ENCODE measurements at regions of chr16 and their contacts with region 1.

Region 1: DNA sequence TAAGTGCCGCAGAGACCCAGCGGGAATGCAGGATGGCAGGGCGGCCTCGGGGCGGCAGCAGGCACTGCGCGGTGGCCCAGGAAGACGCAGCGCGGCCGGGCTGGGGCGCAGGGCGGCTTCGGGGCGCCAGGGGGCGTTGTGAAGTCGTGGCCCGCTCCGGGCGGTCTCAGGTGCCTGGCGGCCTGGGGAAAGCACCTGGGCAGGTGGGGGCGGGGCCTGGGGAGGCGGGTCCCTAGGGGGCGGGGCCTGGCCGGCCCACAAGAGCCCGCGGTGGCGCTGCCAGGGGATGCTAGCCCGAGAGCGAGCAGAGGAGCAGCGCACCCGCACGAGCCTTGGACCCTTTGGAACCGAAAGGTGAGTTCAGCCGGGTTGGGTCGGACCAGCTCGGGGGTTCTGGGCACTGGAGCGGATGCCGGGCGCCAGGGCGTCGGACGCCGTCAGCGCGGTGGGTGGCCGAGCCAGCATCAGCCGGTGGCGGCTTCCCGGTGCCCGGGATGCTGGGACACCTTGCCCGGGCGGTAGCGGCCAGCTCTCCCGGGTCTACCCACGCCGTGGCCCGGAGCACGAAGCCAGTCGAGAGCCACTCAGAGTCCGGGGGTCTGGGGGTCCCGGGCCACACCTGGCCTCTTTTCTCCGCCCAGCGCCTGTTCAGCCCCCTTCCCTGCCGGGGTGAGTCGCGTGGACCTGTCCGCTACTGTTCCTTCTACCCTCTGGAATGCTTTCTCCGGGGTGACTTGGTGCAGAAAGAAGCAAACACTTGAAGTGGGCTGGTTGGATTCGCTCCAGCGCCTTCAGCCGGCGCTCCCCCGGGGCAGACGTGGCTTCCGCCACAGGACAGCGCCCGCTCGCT is at the start of gene SCNN1G:
- DNase-seq: no peak
- H3K4me3 ChIP-seq: peak within 1 kb of the TSS; percentile 17; the same call in 1 of the 2 replicates
- H3K27me3 ChIP-seq: peaks cover 21% of the 10 kb centered on the region
- CTCF ChIP-seq: peak; percentile 65
- polyA plus RNA-seq, gene SCNN1G: not detected in 2 replicates

Region 2: GRCh38 chr16:23105309-23105708 is 77.4 kb before region 1 on chr16:
- CTCF ChIA-PET with region 1: no interaction called
- POLR2A ChIA-PET with region 1: no interaction called
- DNase-seq: no peak
- H3K4me3 ChIP-seq: no peak overlapping the region
- H3K27me3 ChIP-seq: no peaks in the 10 kb centered on the region
- CTCF ChIP-seq: no peak

Region 3: DNA sequence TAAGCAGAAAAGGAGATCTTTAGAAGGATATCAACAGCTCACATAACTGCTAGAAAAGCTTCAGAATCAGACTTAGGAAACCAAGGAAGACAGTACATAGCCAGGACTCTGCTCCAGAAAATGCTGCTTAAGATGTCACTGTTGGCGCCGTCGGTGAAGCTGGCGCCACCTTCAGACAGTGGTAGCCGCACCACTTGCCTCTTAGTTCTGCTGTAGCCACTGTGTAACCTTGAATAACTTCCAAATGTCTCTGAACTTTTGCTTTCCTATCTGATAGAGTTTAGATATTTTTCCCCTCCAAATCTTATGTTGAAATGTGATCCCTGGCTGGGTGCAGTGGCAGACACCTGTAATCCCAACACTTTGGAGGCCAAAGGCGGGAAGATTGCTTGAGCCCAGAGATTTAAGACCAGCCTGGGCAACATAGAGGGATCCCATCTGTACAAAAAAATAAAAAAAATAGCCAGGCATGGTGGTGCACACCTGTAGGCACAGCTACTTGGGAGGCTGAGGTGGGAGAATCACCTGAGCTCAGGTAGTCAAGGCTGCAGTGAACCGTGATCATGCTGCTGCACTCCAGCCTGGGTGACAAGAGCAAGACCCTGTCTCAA is 27.1 kb before region 1 on chr16:
- CTCF ChIA-PET with region 1: no interaction called
- POLR2A ChIA-PET with region 1: no interaction called
- DNase-seq: no peak
- H3K4me3 ChIP-seq: no peak overlapping the region
- H3K27me3 ChIP-seq: 0 out of 2 replicates have a peak, but pooled peaks cover 1% of the 10 kb centered on the region
- CTCF ChIP-seq: peak; percentile 33; the same call in 1 of the 2 replicates

Region 4: GRCh38 chr16:23423496-23424049 is 240.9 kb after region 1 on chr16:
- CTCF ChIA-PET with region 1: interaction called, 14 read pairs
- POLR2A ChIA-PET with region 1: no interaction called
- DNase-seq: peak; percentile 97
- H3K4me3 ChIP-seq: no peak overlapping the region
- H3K27me3 ChIP-seq: no peaks in the 10 kb centered on the region
- CTCF ChIP-seq: no peak

Measured in BJ (cell line).